Dendritic cell treated with granulocyte-macrophage colony-stimulating factor and Interleukin-4, amounts not matched to agents 40 ng/mL and 50 ng/mL, for 4 days (primary cell): ENCODE measurements at regions of chr5 and their contacts with region 1.

Region 1: DNA sequence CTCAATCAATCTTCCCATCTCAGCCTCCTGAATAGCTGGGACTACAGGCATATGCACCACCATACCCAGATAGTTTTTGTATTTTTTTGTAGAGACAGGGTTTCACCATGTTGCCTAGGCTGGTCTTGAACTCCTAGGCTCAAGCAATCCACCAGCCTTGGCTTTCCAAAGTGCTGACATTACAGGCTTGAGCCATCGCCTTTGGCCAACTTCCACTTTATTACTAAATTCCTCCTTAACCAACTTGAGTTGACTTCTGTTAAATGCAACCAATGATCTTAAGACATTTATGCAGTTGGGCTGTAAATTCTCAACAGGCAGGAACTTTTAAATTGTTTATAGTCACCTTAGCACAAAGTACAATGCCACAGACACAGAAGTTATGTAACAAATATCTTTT is 2.8 kb downstream of the LARS1 start:
- H3K4me3 Mint-ChIP-seq: no peak overlapping the region
- H3K27ac Mint-ChIP-seq: no peak overlapping the region
- H3K4me1 Mint-ChIP-seq: peaks cover 11% of the 10 kb centered on the region
- H3K27me3 Mint-ChIP-seq: no peaks in the 10 kb centered on the region

Region 2: DNA sequence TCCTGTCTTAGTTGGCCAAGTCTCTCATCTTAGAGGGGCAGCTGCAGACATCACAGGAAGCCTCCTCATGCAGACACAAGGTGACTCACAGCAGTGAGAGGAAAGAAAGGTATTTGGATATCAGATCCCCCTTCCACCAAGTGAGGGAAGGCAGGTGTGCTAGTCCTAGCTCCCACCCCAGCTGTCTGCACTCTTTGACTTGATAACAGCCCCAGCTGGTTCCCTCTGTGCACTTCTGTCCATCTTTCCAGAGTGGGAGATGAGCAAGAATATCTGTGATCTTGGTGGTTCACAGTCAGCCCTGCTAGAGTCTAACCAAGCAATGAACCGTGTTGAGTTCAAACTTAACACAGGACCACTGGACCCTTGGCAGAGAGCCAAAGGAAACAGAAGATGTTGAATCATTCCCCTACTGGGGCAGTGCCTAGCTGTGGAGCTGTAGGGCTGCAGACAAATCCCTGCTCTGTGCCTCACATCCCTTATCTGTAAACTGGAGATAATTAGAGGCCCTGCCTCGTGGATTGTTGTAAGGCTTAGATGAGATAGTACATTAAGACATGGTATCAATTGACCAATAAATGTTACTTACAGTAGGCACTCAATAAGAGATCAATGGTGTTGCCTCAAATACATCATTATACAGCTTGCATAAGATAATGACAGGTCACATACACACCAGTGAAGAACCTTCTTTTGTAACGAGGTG is 204.2 kb before region 1 on chr5:
- intact Hi-C with region 1: no loop called
- H3K4me3 Mint-ChIP-seq: no peak overlapping the region
- H3K27ac Mint-ChIP-seq: no peak overlapping the region
- H3K4me1 Mint-ChIP-seq: no peaks in the 10 kb centered on the region
- H3K27me3 Mint-ChIP-seq: no peaks in the 10 kb centered on the region

Region 3: DNA sequence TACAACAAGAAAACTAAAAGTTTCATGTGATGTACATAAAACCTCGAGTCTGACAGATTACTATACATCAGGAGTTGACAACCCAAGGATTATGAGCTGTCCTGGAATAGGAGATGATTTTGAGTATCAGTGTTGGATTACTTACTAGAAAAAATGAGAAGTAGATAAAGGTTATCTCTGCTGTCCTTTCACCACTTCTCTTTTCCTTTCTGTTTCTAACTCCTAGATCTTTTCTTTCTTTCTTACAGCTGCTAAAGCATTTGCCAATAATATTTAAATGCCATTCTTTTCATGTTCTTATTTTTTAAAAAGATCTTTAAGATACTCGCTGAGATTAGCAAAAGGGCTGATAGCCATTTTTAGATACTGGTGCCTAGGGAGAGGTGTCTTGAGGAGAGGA is 38.5 kb after region 1 on chr5:
- intact Hi-C with region 1: loop called (anchors 5 kb)
- H3K4me3 Mint-ChIP-seq: no peak overlapping the region
- H3K27ac Mint-ChIP-seq: no peak overlapping the region
- H3K4me1 Mint-ChIP-seq: peaks cover 22% of the 10 kb centered on the region
- H3K27me3 Mint-ChIP-seq: no peaks in the 10 kb centered on the region